AG04449 (cell line): ENCODE measurements at regions of chr17 and their contacts with region 1.

Region 1: GRCh38 chr17:82205719-82206508 is 6.7 kb downstream of the CCDC57 start:
- DNase-seq: peak; percentile 50
- H3K4me3 ChIP-seq: no peak overlapping the region
- CTCF ChIP-seq: peak; percentile 79

Region 2: GRCh38 chr17:82184761-82185160 is 21.2 kb before region 1 on chr17:
- CTCF ChIA-PET with region 1: interaction called, 15 read pairs
- POLR2A ChIA-PET with region 1: no interaction called
- DNase-seq: no peak
- H3K4me3 ChIP-seq: no peak overlapping the region
- CTCF ChIP-seq: no peak

Region 3: GRCh38 chr17:82193520-82194220 is 12.2 kb before region 1 on chr17:
- CTCF ChIA-PET with region 1: interaction called, 16 read pairs
- POLR2A ChIA-PET with region 1: no interaction called
- DNase-seq: no peak
- H3K4me3 ChIP-seq: no peak overlapping the region
- CTCF ChIP-seq: no peak

Region 4: GRCh38 chr17:82217530-82218204 is 11.8 kb after region 1 on chr17:
- CTCF ChIA-PET with region 1: interaction called, 18 read pairs
- POLR2A ChIA-PET with region 1: interaction called, 5 read pairs
- DNase-seq: peak; percentile 52
- H3K4me3 ChIP-seq: no peak overlapping the region
- CTCF ChIP-seq: no peak

Region 5: DNA sequence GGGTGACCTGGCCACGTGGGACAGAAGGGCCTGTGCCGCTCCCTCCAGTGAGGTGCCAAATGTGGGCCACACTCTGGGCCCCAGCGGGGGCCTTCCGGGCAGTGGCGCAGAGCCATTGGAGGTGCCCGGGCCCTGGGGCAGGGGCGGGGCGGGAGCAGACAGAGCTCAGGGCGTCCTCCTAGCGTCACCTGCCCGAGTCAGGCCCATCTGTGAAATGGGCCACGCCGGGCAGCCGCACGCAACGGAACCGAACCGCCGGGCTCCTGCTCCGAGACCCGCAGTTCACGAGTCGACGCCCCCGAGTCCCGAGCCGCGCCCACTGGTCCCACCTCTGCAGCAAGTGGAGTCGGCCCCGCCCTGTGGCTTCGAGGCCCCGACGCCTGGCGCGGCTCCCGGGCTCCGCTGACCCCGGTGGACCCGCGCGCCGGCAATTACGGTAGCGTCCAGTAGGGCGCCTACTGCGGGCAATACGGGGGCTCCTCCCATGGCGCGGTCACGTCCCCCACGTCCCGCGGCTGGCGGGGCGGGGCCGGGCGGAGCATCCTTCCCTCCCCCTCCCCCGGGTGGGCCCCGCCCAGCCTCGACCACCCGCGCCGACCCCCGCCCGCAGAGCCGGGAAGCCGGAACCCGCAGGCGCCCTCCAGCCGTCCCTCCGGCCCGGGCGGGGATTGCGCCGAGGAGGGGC is 24.9 kb after region 1 on chr17:
- CTCF ChIA-PET with region 1: interaction called, 95 read pairs
- POLR2A ChIA-PET with region 1: interaction called, 20 read pairs
- DNase-seq: no peak
- H3K4me3 ChIP-seq: peak overlapping the region; percentile 86
- CTCF ChIP-seq: peak; percentile 60

Region 6: DNA sequence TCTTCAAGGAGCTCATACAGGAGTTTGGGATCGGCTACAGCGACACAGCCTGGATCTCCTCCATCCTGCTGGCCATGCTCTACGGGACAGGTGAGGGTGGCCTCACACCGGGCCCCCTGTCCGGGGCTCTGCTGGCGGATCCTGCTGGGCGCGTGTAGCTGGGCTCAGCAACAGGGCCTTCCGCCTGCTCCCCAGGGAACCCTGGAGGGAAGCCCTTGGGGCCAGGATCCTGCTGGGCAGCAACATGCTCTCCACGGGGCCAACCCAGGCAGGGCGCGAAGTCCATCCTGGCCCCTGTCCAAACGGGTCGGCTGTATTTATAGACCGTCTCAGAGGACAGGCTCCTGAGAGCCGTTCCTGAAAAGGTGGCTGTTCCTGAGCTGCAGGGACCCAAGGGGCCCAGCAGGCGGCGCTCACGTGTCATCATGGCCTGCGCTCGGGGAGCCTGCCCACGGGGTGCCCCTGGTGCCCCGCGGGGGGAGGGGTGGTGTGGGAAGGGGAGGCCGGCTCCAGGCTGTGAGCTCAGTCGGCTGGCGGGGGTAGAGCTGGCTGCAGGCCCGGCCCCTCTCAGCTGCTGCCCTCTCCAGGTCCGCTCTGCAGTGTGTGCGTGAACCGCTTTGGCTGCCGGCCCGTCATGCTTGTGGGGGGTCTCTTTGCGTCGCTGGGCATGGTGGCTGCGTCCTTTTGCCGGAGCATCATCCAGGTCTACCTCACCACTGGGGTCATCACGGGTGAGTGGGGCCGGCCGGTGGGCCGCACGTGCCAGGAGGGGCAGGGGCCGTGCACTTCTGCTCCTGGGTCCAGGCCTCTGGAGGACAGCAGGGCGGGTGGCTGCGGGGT is 30.4 kb after region 1 on chr17:
- CTCF ChIA-PET with region 1: interaction called, 95 read pairs
- POLR2A ChIA-PET with region 1: interaction called, 6 read pairs
- DNase-seq: no peak
- H3K4me3 ChIP-seq: no peak overlapping the region
- CTCF ChIP-seq: peak; percentile 76